ENCODE measurements at regions of chr1 and their contacts with region 1.

Region 1: DNA sequence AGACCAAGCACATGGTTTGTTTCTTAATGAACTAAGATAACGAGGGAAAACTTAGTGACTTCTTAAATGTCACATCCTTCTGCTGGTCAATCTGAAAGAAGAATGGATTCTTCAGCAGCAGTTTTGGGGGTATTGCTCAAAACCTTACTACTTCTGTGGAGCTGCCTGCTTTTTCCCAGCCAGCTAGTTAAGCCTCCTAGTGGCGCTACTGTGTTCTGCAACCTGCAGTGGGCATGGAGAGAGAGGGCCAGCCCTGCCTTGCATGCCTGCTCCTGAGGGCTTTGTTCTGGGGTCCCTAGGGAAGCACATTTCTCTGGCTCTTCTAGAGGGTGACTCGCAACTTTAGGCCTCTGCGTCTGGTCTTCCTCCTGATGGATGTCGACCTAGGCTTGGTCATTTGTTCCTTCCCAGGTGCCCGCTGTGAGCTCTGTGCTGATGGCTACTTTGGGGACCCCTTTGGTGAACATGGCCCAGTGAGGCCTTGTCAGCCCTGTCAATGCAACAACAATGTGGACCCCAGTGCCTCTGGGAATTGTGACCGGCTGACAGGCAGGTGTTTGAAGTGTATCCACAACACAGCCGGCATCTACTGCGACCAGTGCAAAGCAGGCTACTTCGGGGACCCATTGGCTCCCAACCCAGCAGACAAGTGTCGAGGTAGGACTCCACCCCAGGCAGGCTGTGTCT is 42.0 kb downstream of the LAMC2 start:
- DNase-seq: peak; percentile 68 to 71
- H3K4me3 ChIP-seq: no peak overlapping the region
- H3K4me3 Mint-ChIP-seq: no peak overlapping the region
- H3K27ac Mint-ChIP-seq: peak overlapping the region; percentile 49
- H3K4me1 ChIP-seq: peaks cover 51% of the 10 kb centered on the region
- H3K4me1 Mint-ChIP-seq: peaks cover 25% of the 10 kb centered on the region
- H3K27me3 ChIP-seq: no peaks in the 10 kb centered on the region
- H3K27me3 Mint-ChIP-seq: no peaks in the 10 kb centered on the region
- CTCF ChIP-seq: peak; percentile 61 to 68

Region 2: GRCh38 chr1:182962554-182963115 is 265.5 kb before region 1 on chr1:
- CTCF ChIA-PET with region 1: interaction called, 19 read pairs
- POLR2A ChIA-PET with region 1: interaction called, 3 read pairs
- intact Hi-C with region 1: no loop called
- DNase-seq: peak; percentile 78 to 81
- H3K4me3 ChIP-seq: peak overlapping the region; percentile 21; the same call in 1 of the 2 replicates
- H3K4me3 Mint-ChIP-seq: peak overlapping the region; percentile 55
- H3K27ac Mint-ChIP-seq: peak overlapping the region; percentile 58
- H3K4me1 ChIP-seq: peaks cover 36% of the 10 kb centered on the region
- H3K4me1 Mint-ChIP-seq: peaks cover 14% of the 10 kb centered on the region
- H3K27me3 ChIP-seq: no peaks in the 10 kb centered on the region
- H3K27me3 Mint-ChIP-seq: no peaks in the 10 kb centered on the region
- CTCF ChIP-seq: peak; percentile 90 to 93

Region 3: GRCh38 chr1:183023601-183024316 is 204.3 kb before region 1 on chr1:
- CTCF ChIA-PET with region 1: no interaction called
- POLR2A ChIA-PET with region 1: no interaction called
- intact Hi-C with region 1: loop called (anchors 1 kb)
- DNase-seq: peak; percentile 93
- H3K4me3 ChIP-seq: peak overlapping the region; percentile 92
- H3K4me3 Mint-ChIP-seq: peak overlapping the region; percentile 97
- H3K27ac Mint-ChIP-seq: peak overlapping the region; percentile 90
- H3K4me1 ChIP-seq: peaks cover 50% of the 10 kb centered on the region
- H3K4me1 Mint-ChIP-seq: peaks cover 33% of the 10 kb centered on the region
- H3K27me3 ChIP-seq: no peaks in the 10 kb centered on the region
- H3K27me3 Mint-ChIP-seq: no peaks in the 10 kb centered on the region
- CTCF ChIP-seq: peak; percentile 50 to 85

Region 4: DNA sequence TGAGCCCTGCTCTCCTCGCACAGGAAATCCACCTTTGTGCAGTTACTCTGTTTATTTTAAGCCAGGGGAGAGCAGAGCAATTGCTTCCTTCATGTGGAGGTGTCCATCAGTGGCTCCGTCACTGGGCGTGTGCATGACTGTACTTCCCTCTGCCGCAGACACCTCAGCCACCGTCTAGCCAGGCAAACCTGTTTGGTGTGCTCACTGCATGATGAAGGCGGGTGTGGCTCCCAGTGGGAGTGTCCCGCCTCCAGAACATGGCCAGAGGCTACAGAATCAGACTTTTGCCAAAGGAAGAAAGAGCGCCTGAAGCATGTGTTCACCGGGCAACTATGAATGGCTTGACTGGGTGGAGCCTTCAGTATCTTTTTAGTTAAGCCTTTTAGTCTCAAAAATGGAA is 68.1 kb before region 1 on chr1:
- CTCF ChIA-PET with region 1: no interaction called
- POLR2A ChIA-PET with region 1: no interaction called
- intact Hi-C with region 1: loop called (anchors 2 kb)
- DNase-seq: peak; percentile 95 to 97
- H3K4me3 ChIP-seq: 0 out of 2 replicates have a peak overlapping the region, but pooled peaks have one; percentile 1
- H3K4me3 Mint-ChIP-seq: peak overlapping the region; percentile 52
- H3K27ac Mint-ChIP-seq: peak overlapping the region; percentile 69
- H3K4me1 ChIP-seq: peaks cover 29% of the 10 kb centered on the region
- H3K4me1 Mint-ChIP-seq: no peaks in the 10 kb centered on the region
- H3K27me3 ChIP-seq: no peaks in the 10 kb centered on the region
- H3K27me3 Mint-ChIP-seq: no peaks in the 10 kb centered on the region
- CTCF ChIP-seq: no peak

Region 5: GRCh38 chr1:183195142-183195574 is 32.9 kb before region 1 on chr1:
- CTCF ChIA-PET with region 1: no interaction called
- POLR2A ChIA-PET with region 1: no interaction called
- intact Hi-C with region 1: loop called (anchors 1 kb)
- DNase-seq: peak; percentile 18 to 66
- H3K4me3 ChIP-seq: no peak overlapping the region
- H3K4me3 Mint-ChIP-seq: no peak overlapping the region
- H3K27ac Mint-ChIP-seq: peak overlapping the region; percentile 9
- H3K4me1 ChIP-seq: peaks cover 9% of the 10 kb centered on the region
- H3K4me1 Mint-ChIP-seq: peaks cover 7% of the 10 kb centered on the region
- H3K27me3 ChIP-seq: no peaks in the 10 kb centered on the region
- H3K27me3 Mint-ChIP-seq: no peaks in the 10 kb centered on the region
- CTCF ChIP-seq: no peak

Region 6: DNA sequence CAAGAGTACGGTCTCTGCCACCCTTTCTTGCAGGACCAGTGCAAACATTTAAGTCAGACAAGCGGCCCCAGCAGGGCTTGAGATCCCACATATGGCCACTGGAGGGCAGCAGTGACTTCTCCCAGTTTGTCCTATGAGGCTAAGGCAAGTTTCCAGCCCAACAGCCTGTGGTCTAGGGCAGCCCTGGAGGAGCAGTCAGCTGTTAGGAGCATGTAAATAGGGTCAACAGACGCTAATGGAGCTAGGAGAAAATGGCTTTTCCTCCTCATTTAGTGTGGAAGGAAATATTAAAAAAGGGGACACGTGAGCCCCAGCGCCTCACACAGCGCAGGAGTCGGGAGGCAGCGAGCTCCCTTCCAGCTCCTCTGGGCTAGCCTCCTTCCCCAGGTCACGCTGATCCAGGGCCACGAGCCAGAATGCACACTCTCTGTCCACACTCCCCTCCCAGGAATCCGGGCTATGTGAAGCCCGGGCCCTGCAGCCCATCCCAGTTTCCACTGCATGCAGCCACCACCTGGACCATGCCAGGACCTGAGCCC is 53.5 kb after region 1 on chr1:
- CTCF ChIA-PET with region 1: no interaction called
- POLR2A ChIA-PET with region 1: no interaction called
- intact Hi-C with region 1: loop called (anchors 2 kb)
- DNase-seq: peak; percentile 88 to 89
- H3K4me3 ChIP-seq: no peak overlapping the region
- H3K4me3 Mint-ChIP-seq: peak overlapping the region; percentile 49
- H3K27ac Mint-ChIP-seq: peak overlapping the region; percentile 88
- H3K4me1 ChIP-seq: peaks cover 48% of the 10 kb centered on the region
- H3K4me1 Mint-ChIP-seq: peaks cover 31% of the 10 kb centered on the region
- H3K27me3 ChIP-seq: no peaks in the 10 kb centered on the region
- H3K27me3 Mint-ChIP-seq: no peaks in the 10 kb centered on the region
- CTCF ChIP-seq: peak; percentile 80 to 88

Region 7: GRCh38 chr1:183368202-183369108 is 140.3 kb after region 1 on chr1:
- CTCF ChIA-PET with region 1: no interaction called
- POLR2A ChIA-PET with region 1: no interaction called
- intact Hi-C with region 1: no loop called
- DNase-seq: peak in 1 of 2 experiments; percentile 10
- H3K4me3 ChIP-seq: no peak overlapping the region
- H3K4me3 Mint-ChIP-seq: no peak overlapping the region
- H3K27ac Mint-ChIP-seq: no peak overlapping the region
- H3K4me1 ChIP-seq: peaks cover 7% of the 10 kb centered on the region
- H3K4me1 Mint-ChIP-seq: peaks cover 17% of the 10 kb centered on the region
- H3K27me3 ChIP-seq: no peaks in the 10 kb centered on the region
- H3K27me3 Mint-ChIP-seq: no peaks in the 10 kb centered on the region
- CTCF ChIP-seq: no peak